CD8-positive, alpha-beta T cell (primary cell): ENCODE measurements at regions of chr2 and their contacts with region 1.

Region 1: GRCh38 chr2:70871398-70872211 is 36.0 kb upstream of the CD207 start:
- DNase-seq: peak; percentile 60 to 88 (median 82)
- ATAC-seq: peak; percentile 94
- H3K4me3 ChIP-seq: peak overlapping the region in 1 of 2 experiments; percentile 21
- H3K4me3 Mint-ChIP-seq: peak overlapping the region; percentile 22
- H3K27ac ChIP-seq: no peak overlapping the region
- H3K27ac Mint-ChIP-seq: no peak overlapping the region
- H3K4me1 ChIP-seq: peaks cover 8% of the 10 kb centered on the region
- H3K4me1 Mint-ChIP-seq: peaks cover 5% of the 10 kb centered on the region
- H3K27me3 ChIP-seq: peaks cover 11 to 18% of the 10 kb centered on the region in 2 experiments
- H3K27me3 Mint-ChIP-seq: peaks cover 44% of the 10 kb centered on the region
- CTCF ChIP-seq: peak; percentile 97

Region 2: GRCh38 chr2:70656421-70657010 is 215.1 kb before region 1 on chr2:
- CTCF ChIA-PET with region 1: interaction called, 3 read pairs
- POLR2A ChIA-PET with region 1: no interaction called
- intact Hi-C with region 1: loop called in 1 of 2 experiments (anchors 1 kb)
- DNase-seq: peak in 7 of 9 experiments; percentile 11 to 79 (median 57)
- ATAC-seq: peak; percentile 84
- H3K4me3 ChIP-seq: no peak overlapping the region
- H3K4me3 Mint-ChIP-seq: peak overlapping the region; percentile 10
- H3K27ac ChIP-seq: peak overlapping the region in 1 of 2 experiments; percentile 13
- H3K27ac Mint-ChIP-seq: peak overlapping the region; percentile 77
- H3K4me1 ChIP-seq: peaks cover 29% of the 10 kb centered on the region
- H3K4me1 Mint-ChIP-seq: peaks cover 37% of the 10 kb centered on the region
- H3K27me3 ChIP-seq: no peaks in the 10 kb centered on the region
- H3K27me3 Mint-ChIP-seq: peaks cover 13% of the 10 kb centered on the region
- CTCF ChIP-seq: no peak

Region 3: DNA sequence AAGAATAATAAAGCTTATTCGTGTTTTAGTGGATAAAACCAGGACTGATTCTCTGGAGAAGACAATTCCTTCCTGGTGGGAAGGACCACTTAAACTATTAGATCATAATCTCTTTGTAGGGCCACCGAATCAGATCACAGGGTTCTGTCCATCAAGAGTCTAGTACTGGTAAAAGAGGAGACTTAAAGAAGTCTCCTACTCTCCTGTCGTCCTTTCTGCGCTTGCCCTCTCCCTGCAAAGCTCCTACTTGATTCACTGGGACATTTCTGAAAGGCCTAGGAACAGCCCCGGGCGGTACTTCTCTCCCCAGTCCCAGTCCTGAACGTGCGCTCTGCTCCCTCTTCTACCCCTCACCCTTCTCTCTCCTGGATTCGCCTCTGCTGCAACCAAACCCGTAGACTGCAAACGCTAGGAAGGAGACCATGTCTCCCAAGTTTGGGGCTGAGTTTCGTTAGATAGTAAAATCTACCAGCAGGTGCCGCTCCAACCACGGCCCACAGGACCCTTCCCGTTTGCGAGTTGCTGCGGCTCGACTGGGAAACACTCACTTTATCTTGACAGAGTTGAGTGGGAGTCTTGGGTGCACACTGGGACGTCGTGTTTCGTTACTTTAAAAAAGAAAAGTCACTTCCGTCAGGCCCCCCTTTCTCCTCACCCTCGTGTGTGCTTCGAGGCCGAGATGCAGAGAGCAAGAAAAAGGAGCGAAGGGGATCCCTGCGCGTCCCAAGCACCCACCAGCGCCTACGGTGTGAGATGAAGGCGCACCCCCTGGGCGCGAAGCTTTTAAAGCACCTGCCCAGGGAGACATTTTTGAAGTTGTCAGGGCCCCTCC is 82.1 kb before region 1 on chr2:
- CTCF ChIA-PET with region 1: interaction called, 10 read pairs
- POLR2A ChIA-PET with region 1: no interaction called
- intact Hi-C with region 1: loop called in 1 of 2 experiments (anchors 1 kb)
- DNase-seq: peak; percentile 30 to 78 (median 67)
- ATAC-seq: peak; percentile 73
- H3K4me3 ChIP-seq: peak overlapping the region; percentile 32 to 36
- H3K4me3 Mint-ChIP-seq: peak overlapping the region; percentile 82
- H3K27ac ChIP-seq: no peak overlapping the region
- H3K27ac Mint-ChIP-seq: no peak overlapping the region
- H3K4me1 ChIP-seq: peaks cover 8% of the 10 kb centered on the region
- H3K4me1 Mint-ChIP-seq: peaks cover 13% of the 10 kb centered on the region
- H3K27me3 ChIP-seq: peaks cover 7 to 11% of the 10 kb centered on the region in 2 experiments
- H3K27me3 Mint-ChIP-seq: peaks cover 51% of the 10 kb centered on the region
- CTCF ChIP-seq: peak; percentile 54

Region 4: DNA sequence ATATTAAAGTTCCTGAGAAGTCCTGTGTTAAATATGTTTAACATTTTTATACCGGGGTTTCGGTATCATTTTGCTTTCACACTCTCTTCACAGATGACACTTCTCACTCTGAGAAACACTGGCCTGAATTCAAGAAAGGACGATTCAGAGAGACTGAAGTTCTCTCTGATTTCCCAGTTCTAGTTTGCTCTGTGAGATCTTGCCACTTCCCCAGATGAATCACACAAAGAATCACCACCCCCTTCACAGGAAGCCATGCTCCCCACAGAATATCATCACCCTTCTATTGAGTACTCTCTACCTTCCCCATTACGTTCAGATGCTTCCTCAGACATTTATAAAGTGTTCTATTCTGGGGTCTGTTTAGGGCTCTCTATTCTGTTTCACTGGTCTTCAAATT is 19.9 kb before region 1 on chr2:
- CTCF ChIA-PET with region 1: interaction called, 20 read pairs
- POLR2A ChIA-PET with region 1: no interaction called
- intact Hi-C with region 1: no loop called
- DNase-seq: peak in 5 of 9 experiments; percentile 29 to 76 (median 54)
- ATAC-seq: peak; percentile 94
- H3K4me3 ChIP-seq: no peak overlapping the region
- H3K4me3 Mint-ChIP-seq: peak overlapping the region; percentile 15
- H3K27ac ChIP-seq: peak overlapping the region in 1 of 2 experiments; percentile 57
- H3K27ac Mint-ChIP-seq: peak overlapping the region; percentile 64
- H3K4me1 ChIP-seq: peaks cover 19% of the 10 kb centered on the region
- H3K4me1 Mint-ChIP-seq: peaks cover 22% of the 10 kb centered on the region
- H3K27me3 ChIP-seq: no peaks in the 10 kb centered on the region
- H3K27me3 Mint-ChIP-seq: no peaks in the 10 kb centered on the region
- CTCF ChIP-seq: no peak

Region 5: GRCh38 chr2:70887550-70888246 is 16.1 kb after region 1 on chr2:
- CTCF ChIA-PET with region 1: interaction called, 17 read pairs
- POLR2A ChIA-PET with region 1: no interaction called
- intact Hi-C with region 1: no loop called
- DNase-seq: peak in 5 of 9 experiments; percentile 24 to 70 (median 32)
- ATAC-seq: peak; percentile 31
- H3K4me3 ChIP-seq: peak overlapping the region; percentile 50 to 56
- H3K4me3 Mint-ChIP-seq: peak overlapping the region; percentile 75
- H3K27ac ChIP-seq: no peak overlapping the region
- H3K27ac Mint-ChIP-seq: no peak overlapping the region
- H3K4me1 ChIP-seq: peaks cover 24% of the 10 kb centered on the region
- H3K4me1 Mint-ChIP-seq: peaks cover 26% of the 10 kb centered on the region
- H3K27me3 ChIP-seq: peaks cover 29 to 43% of the 10 kb centered on the region in 2 experiments
- H3K27me3 Mint-ChIP-seq: peaks cover 69% of the 10 kb centered on the region
- CTCF ChIP-seq: no peak

Region 6: GRCh38 chr2:70919672-70920366 is 48.2 kb after region 1 on chr2:
- CTCF ChIA-PET with region 1: interaction called, 60 read pairs
- POLR2A ChIA-PET with region 1: no interaction called
- intact Hi-C with region 1: loop called (anchors 1 to 2 kb)
- DNase-seq: peak; percentile 39 to 80 (median 71)
- ATAC-seq: peak; percentile 61
- H3K4me3 ChIP-seq: no peak overlapping the region
- H3K4me3 Mint-ChIP-seq: no peak overlapping the region
- H3K27ac ChIP-seq: no peak overlapping the region
- H3K27ac Mint-ChIP-seq: no peak overlapping the region
- H3K4me1 ChIP-seq: no peaks in the 10 kb centered on the region
- H3K4me1 Mint-ChIP-seq: no peaks in the 10 kb centered on the region
- H3K27me3 ChIP-seq: peaks cover 0 to 3% of the 10 kb centered on the region in 2 experiments
- H3K27me3 Mint-ChIP-seq: peaks cover 34% of the 10 kb centered on the region
- CTCF ChIP-seq: peak; percentile 86

Region 7: DNA sequence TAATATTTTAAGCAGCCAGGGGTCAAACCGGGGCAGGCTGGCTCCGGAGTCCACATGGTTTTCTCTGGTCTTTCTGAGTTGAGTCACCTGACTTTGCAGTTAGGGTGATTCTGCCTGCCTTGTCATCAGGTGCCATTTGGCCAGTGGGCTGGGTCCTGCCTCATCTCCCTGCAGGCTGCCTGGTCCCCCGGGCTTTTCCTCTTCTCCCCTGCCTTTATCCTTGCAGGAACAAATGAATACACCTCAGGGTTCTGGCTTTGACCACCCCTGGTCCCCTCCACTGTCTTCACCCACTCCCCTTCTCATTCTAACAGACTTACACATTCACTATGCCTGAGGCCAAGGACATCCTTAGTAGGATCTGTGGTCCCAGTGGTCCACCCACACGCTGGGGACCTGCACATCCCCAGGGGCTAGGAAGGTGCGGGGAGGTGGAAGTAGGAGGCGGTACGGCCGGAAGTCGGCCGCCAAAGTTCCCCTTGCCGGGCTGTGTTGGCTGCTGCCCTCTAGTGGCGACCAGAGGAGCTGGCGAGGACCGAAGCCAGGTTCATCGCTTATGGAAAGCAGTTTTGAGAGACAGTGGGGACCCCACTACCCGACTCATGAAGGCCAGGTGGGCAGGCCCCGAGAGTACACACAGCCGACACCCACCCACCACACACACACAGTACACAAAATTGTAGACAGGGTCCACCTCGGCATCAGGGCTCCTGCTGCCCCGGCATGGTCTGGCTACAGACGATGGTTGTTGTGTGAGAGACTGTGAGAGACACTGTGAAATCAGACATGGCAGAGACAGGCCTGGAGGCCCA is 129.4 kb after region 1 on chr2:
- CTCF ChIA-PET with region 1: no interaction called
- POLR2A ChIA-PET with region 1: no interaction called
- intact Hi-C with region 1: loop called in 1 of 2 experiments (anchors 1 kb)
- DNase-seq: peak; percentile 58 to 89 (median 81)
- ATAC-seq: peak; percentile 99
- H3K4me3 ChIP-seq: peak overlapping the region; percentile 39 to 44
- H3K4me3 Mint-ChIP-seq: peak overlapping the region; percentile 49
- H3K27ac ChIP-seq: peak overlapping the region in 1 of 2 experiments; percentile 48
- H3K27ac Mint-ChIP-seq: no peak overlapping the region
- H3K4me1 ChIP-seq: peaks cover 11% of the 10 kb centered on the region
- H3K4me1 Mint-ChIP-seq: peaks cover 12% of the 10 kb centered on the region
- H3K27me3 ChIP-seq: no peaks in the 10 kb centered on the region
- H3K27me3 Mint-ChIP-seq: peaks cover 5% of the 10 kb centered on the region
- CTCF ChIP-seq: peak; percentile 80